Activated naive CD4-positive, alpha-beta T cell treated with anti-CD3 and anti-CD28 coated beads for 36 hours (primary cell): ENCODE measurements at regions of chr6 and their contacts with region 1.

Region 1: GRCh38 chr6:45714741-45715507 is 300.7 kb downstream of the CLIC5 start:
- DNase-seq: peak; percentile 73
- H3K4me3 Mint-ChIP-seq: no peak overlapping the region
- H3K27ac Mint-ChIP-seq: no peak overlapping the region
- H3K4me1 Mint-ChIP-seq: peaks cover 35% of the 10 kb centered on the region
- H3K27me3 Mint-ChIP-seq: no peaks in the 10 kb centered on the region

Region 2: DNA sequence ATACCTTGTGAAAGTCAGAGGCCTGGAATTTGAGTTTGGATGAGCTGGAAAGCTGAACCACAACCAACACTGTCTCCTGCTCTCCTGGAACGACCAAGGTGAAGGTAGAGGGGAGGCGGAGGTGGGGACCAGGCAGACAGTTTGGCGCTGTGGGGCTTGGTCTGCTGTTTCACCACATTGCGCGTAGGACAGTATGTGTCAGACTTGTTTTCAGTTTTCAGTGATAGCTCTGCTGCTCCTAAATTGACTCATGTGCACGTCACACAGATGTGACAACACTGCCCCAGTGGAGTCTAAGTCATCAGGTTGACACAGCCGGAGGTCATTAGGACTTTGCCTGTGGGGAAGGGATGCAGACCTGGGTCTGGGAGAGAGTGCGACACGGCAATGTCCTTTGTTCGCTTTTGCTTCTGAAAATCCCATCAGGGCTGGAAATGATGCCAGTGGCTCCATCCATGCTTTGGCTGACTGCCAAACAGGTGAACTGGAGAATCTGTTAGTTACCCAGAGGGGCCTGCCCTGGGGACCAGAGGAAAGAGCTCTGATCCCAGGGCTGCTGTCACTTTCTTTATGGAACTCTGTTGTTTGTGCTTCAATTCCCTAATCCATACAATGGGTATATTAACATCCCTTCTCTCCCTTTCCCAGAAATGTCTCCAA is 1071.9 kb before region 1 on chr6:
- CTCF ChIA-PET with region 1: no interaction called
- intact Hi-C with region 1: loop called (anchors 5 kb)
- DNase-seq: peak; percentile 71
- H3K4me3 Mint-ChIP-seq: no peak overlapping the region
- H3K27ac Mint-ChIP-seq: peak overlapping the region; percentile 73
- H3K4me1 Mint-ChIP-seq: peaks cover 14% of the 10 kb centered on the region
- H3K27me3 Mint-ChIP-seq: no peaks in the 10 kb centered on the region

Region 3: DNA sequence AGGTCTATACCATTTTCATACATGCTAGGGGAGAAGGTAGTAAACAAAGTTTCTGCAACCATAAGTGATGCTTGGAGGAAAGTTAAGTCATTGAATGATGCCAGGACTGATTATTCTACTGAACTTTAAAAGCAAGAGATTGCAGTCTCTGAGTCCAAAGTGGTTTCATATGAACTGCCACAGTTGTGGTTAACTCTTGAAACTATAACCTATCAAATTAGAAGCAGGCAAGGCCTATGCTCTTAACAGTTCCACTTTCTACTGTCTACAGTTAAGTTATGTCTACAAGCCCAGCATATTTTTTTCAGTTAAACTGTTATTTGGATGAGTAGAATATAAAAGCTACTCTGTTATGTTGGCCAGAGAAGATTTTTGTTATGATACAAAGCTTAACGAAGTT is 713.3 kb before region 1 on chr6:
- CTCF ChIA-PET with region 1: no interaction called
- intact Hi-C with region 1: loop called (anchors 10 kb)
- DNase-seq: no peak
- H3K4me3 Mint-ChIP-seq: no peak overlapping the region
- H3K27ac Mint-ChIP-seq: no peak overlapping the region
- H3K4me1 Mint-ChIP-seq: peaks cover 19% of the 10 kb centered on the region
- H3K27me3 Mint-ChIP-seq: no peaks in the 10 kb centered on the region

Region 4: DNA sequence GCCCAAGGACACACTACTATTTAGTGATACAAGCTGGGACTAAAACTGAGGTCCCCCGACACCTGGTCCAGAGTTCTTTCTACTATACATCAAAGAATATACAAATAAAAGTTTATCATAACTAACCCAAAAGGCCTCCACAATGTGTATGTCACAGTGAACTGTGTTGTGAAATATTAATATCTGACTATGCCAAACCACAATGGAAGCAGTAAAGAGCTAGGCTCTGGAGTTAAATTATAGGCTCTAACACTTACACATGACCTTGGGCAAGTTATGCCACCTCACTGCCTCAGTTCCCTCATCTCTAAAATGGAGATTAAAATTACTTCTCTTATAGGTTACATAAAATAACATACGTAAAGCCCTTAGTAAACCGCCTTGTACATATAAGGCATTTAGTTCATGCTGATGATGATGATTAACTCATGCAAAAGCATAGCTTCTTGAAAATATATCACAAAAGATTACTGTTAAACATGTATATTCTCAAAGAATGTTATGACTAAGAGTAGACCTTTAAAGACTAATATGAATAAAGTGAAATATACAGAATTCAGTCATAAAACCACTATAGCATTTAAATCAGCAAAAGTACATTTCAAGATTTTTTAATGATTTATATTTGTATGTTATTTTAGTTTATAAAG is 342.9 kb before region 1 on chr6:
- CTCF ChIA-PET with region 1: interaction called, 4 read pairs
- intact Hi-C with region 1: loop called (anchors 1 kb)
- DNase-seq: peak; percentile 15
- H3K4me3 Mint-ChIP-seq: no peak overlapping the region
- H3K27ac Mint-ChIP-seq: peak overlapping the region; percentile 47
- H3K4me1 Mint-ChIP-seq: peaks cover 35% of the 10 kb centered on the region
- H3K27me3 Mint-ChIP-seq: no peaks in the 10 kb centered on the region

Region 5: GRCh38 chr6:45486736-45487135 is 228.2 kb before region 1 on chr6:
- CTCF ChIA-PET with region 1: interaction called, 3 read pairs
- intact Hi-C with region 1: loop called (anchors 2 kb)
- DNase-seq: peak; percentile 46
- H3K4me3 Mint-ChIP-seq: no peak overlapping the region
- H3K27ac Mint-ChIP-seq: peak overlapping the region; percentile 54
- H3K4me1 Mint-ChIP-seq: peaks cover 38% of the 10 kb centered on the region
- H3K27me3 Mint-ChIP-seq: no peaks in the 10 kb centered on the region

Region 6: DNA sequence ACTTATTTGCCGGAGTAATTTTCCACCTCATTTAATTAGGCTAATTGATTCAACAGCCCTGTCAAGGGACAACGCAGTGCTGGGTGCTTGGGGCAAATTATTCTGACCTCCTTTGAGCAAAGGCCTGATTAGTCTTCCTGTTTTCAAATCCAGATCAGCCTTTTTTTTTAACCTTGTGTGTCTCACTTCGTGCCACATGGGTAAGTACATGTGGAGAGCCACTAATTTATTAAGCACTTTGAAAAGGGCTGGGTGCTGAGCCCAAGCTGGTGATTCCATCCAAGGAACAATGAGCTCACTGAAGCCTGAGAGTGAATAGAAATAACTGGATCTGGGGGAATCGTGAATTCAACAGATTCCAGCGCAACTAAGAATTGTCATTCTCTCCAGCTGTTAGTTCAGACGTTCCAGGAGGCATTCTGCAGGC is 71.4 kb after region 1 on chr6:
- CTCF ChIA-PET with region 1: no interaction called
- intact Hi-C with region 1: no loop called
- DNase-seq: no peak
- H3K4me3 Mint-ChIP-seq: no peak overlapping the region
- H3K27ac Mint-ChIP-seq: no peak overlapping the region
- H3K4me1 Mint-ChIP-seq: peaks cover 3% of the 10 kb centered on the region
- H3K27me3 Mint-ChIP-seq: no peaks in the 10 kb centered on the region

Region 7: DNA sequence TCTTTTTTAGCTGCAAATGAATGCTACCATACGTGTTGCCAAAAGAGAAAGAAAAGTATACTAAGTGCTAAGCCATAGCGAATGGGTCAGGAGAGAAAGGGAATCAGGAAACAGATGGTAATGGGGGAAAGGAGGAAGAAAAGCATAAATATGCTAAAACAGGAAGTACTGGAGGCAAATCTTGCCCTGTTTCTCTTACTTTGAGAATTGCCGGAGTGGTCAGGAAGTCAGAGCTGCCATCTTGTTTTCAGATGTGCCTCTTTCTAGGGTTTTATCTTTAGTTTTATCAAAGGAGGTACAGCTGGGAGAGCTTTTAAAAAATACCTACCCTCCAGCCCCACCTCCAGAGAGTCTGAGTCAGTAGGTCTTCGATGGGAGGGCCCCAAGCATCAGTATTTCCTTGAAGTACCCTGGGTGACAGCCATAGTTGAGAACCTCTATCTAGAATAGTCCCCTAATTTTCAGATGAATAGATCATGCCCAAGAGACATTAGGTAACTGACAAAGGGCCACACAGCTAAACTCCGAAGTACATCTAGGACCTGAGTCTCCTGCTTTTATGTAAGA is 107.4 kb after region 1 on chr6:
- CTCF ChIA-PET with region 1: no interaction called
- intact Hi-C with region 1: loop called (anchors 2 kb)
- DNase-seq: peak; percentile 59
- H3K4me3 Mint-ChIP-seq: peak overlapping the region; percentile 1
- H3K27ac Mint-ChIP-seq: peak overlapping the region; percentile 74
- H3K4me1 Mint-ChIP-seq: peaks cover 19% of the 10 kb centered on the region
- H3K27me3 Mint-ChIP-seq: peaks cover 4% of the 10 kb centered on the region

Region 8: GRCh38 chr6:47690209-47690608 is 1975.3 kb after region 1 on chr6:
- CTCF ChIA-PET with region 1: no interaction called
- intact Hi-C with region 1: no loop called
- DNase-seq: no peak
- H3K4me3 Mint-ChIP-seq: no peak overlapping the region
- H3K27ac Mint-ChIP-seq: no peak overlapping the region
- H3K4me1 Mint-ChIP-seq: no peaks in the 10 kb centered on the region
- H3K27me3 Mint-ChIP-seq: no peaks in the 10 kb centered on the region